Activated naive CD4-positive, alpha-beta T cell treated with anti-CD3 and anti-CD28 coated beads for 36 hours (primary cell): ENCODE measurements at regions of chr5 and their contacts with region 1.

Region 1: GRCh38 chr5:157130925-157131324 is 11.7 kb downstream of the MED7 start:
- DNase-seq: no peak
- H3K4me3 Mint-ChIP-seq: no peak overlapping the region
- H3K27ac Mint-ChIP-seq: no peak overlapping the region
- H3K4me1 Mint-ChIP-seq: peaks cover 38% of the 10 kb centered on the region
- H3K27me3 Mint-ChIP-seq: no peaks in the 10 kb centered on the region

Region 2: DNA sequence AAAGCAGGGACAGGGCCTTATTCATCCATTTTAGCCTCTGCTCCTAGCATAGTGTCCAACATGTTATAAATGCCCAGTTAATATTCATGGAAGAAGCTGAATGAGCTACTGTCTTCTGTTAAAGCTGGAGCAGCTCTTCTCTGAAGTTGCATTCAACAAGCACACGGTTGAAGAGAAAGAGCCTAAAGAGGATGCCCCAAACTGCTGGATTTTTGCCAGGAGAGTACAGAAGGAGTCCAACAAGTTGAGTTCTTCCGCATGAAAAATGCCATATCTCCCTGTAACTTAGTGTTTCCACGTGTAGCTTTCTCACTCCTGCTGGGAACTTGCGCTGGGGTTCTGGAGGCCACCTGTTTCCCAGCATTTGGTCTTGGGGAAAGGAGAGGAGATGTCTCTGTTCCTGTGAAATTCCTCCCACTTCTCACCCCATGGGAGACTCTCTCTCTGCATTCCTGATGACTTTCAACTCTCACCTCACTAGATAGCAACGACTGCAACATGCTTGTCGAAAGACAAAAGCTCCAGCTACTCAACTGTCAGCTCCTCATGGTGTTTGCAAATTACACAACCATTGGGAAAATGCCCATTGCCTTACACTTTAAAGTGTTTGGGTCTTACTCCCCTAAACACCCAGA is 1994.6 kb before region 1 on chr5:
- CTCF ChIA-PET with region 1: no interaction called
- intact Hi-C with region 1: loop called (anchors 2 kb)
- DNase-seq: no peak
- H3K4me3 Mint-ChIP-seq: no peak overlapping the region
- H3K27ac Mint-ChIP-seq: no peak overlapping the region
- H3K4me1 Mint-ChIP-seq: peaks cover 2% of the 10 kb centered on the region
- H3K27me3 Mint-ChIP-seq: peaks cover 18% of the 10 kb centered on the region

Region 3: GRCh38 chr5:156402387-156402921 is 728.5 kb before region 1 on chr5:
- CTCF ChIA-PET with region 1: no interaction called
- intact Hi-C with region 1: loop called (anchors 10 kb)
- DNase-seq: peak; percentile 78
- H3K4me3 Mint-ChIP-seq: no peak overlapping the region
- H3K27ac Mint-ChIP-seq: no peak overlapping the region
- H3K4me1 Mint-ChIP-seq: peaks cover 12% of the 10 kb centered on the region
- H3K27me3 Mint-ChIP-seq: peaks cover 8% of the 10 kb centered on the region

Region 4: DNA sequence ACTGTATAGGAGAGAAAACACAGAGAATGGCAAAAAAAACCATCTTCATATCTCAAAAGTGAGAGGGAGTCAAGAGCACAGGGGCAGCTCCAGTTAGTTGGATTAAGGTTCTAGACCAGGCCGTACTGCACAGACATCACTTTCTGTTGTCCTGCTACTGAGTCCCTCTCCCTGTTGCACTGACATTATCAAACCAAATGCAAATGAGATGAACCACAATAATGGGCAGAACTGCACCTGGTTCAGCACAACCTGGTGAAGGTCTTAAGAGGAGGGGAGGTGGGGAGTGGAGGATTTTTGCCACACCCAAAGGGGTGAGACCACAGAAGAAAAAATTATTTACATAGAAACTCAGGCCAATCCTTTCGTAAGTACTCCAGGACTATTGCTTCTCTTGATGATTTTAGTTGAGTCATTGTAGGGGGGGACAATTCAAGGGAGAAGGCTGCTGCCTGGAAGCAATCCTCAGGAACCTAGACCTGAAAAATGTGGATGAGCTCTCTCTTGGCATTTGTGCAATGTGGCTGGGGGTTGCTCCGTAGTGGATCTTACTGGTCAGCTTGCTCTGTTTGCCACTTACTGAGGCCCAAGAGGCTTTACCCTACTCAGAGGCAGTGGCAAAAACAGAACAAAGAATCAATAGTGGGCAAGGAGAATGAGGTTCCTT is 375.4 kb before region 1 on chr5:
- CTCF ChIA-PET with region 1: no interaction called
- intact Hi-C with region 1: loop called (anchors 10 kb)
- DNase-seq: no peak
- H3K4me3 Mint-ChIP-seq: no peak overlapping the region
- H3K27ac Mint-ChIP-seq: no peak overlapping the region
- H3K4me1 Mint-ChIP-seq: peaks cover 23% of the 10 kb centered on the region
- H3K27me3 Mint-ChIP-seq: no peaks in the 10 kb centered on the region

Region 5: GRCh38 chr5:156892223-156892622 is 238.7 kb before region 1 on chr5:
- CTCF ChIA-PET with region 1: interaction called, 3 read pairs
- intact Hi-C with region 1: loop called (anchors 1 kb)
- DNase-seq: no peak
- H3K4me3 Mint-ChIP-seq: no peak overlapping the region
- H3K27ac Mint-ChIP-seq: peak overlapping the region; percentile 78
- H3K4me1 Mint-ChIP-seq: peaks cover 41% of the 10 kb centered on the region
- H3K27me3 Mint-ChIP-seq: no peaks in the 10 kb centered on the region

Region 6: DNA sequence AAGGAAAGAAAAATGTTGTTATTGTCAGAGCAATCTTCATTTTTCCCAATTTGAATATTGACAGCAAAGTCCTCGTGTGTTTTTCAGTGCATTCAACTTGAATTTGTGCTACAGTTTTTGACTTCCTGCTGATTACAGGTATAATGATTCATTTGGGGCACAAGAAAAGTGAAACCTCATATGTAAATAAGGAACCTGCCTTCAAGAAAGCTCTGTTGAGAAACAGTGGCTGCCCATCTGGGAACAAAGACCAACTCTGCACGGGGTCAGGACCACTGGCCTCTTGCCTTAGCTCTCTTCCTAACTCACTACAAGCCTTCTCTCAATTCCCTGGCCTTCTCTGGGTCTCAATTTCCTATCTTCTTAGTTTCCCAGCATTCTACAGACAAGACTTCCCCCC is 188.9 kb before region 1 on chr5:
- CTCF ChIA-PET with region 1: interaction called, 6 read pairs
- intact Hi-C with region 1: loop called (anchors 1 kb)
- DNase-seq: peak; percentile 33
- H3K4me3 Mint-ChIP-seq: no peak overlapping the region
- H3K27ac Mint-ChIP-seq: peak overlapping the region; percentile 90
- H3K4me1 Mint-ChIP-seq: peaks cover 21% of the 10 kb centered on the region
- H3K27me3 Mint-ChIP-seq: no peaks in the 10 kb centered on the region

Region 7: GRCh38 chr5:157100140-157100679 is 30.7 kb before region 1 on chr5:
- CTCF ChIA-PET with region 1: interaction called, 4 read pairs
- intact Hi-C with region 1: loop called (anchors 1 kb)
- DNase-seq: peak; percentile 71
- H3K4me3 Mint-ChIP-seq: peak overlapping the region; percentile 32
- H3K27ac Mint-ChIP-seq: peak overlapping the region; percentile 96
- H3K4me1 Mint-ChIP-seq: peaks cover 29% of the 10 kb centered on the region
- H3K27me3 Mint-ChIP-seq: no peaks in the 10 kb centered on the region